Dendritic cell treated with granulocyte-macrophage colony-stimulating factor and Interleukin-4, amounts not matched to agents 40 ng/mL and 50 ng/mL, for 4 days (primary cell): ENCODE measurements at regions of chr16 and their contacts with region 1.

Region 1: GRCh38 chr16:20900299-20901067 is at the starts of genes DCUN1D3 and LYRM1:
- H3K4me3 Mint-ChIP-seq: peak within 1 kb of the TSS; percentile 95
- H3K27ac Mint-ChIP-seq: peak within 1 kb of the TSS; percentile 99
- H3K4me1 Mint-ChIP-seq: peaks cover 76% of the 10 kb centered on the region
- H3K27me3 Mint-ChIP-seq: no peaks in the 10 kb centered on the region

Region 2: GRCh38 chr16:20883558-20884556 is 16.6 kb before region 1 on chr16:
- intact Hi-C with region 1: no loop called
- H3K4me3 Mint-ChIP-seq: no peak overlapping the region
- H3K27ac Mint-ChIP-seq: no peak overlapping the region
- H3K4me1 Mint-ChIP-seq: peaks cover 54% of the 10 kb centered on the region
- H3K27me3 Mint-ChIP-seq: no peaks in the 10 kb centered on the region

Region 3: DNA sequence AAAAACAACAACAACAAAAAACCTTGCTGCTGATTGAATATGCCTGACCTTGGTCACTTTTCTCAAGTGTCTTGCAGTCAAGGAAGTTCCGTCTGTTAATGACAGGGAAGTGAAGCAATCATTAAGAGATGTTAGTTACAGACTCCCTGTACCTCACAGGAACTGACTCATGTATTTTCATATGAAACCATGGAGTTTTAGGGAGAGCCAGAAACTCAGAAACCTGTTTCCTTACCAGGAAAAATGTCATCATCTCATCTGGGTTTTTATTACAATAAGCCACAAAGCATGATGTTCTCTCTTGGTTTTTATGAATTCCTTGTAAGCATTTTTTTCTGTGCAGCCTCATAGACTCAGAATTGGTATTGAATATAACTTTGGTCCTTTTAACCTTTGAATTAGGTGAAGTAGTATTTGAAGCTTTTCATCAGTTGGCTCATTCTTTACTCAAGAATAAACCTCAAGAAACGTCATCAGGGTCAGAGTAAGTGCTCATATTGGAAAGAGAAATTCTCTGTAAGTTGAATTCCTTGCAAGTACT is 10.4 kb after region 1 on chr16:
- intact Hi-C with region 1: loop called (anchors 1 kb)
- H3K4me3 Mint-ChIP-seq: peak overlapping the region; percentile 56
- H3K27ac Mint-ChIP-seq: peak overlapping the region; percentile 96
- H3K4me1 Mint-ChIP-seq: peaks cover 69% of the 10 kb centered on the region
- H3K27me3 Mint-ChIP-seq: no peaks in the 10 kb centered on the region

Region 4: GRCh38 chr16:20918486-20919239 is 18.2 kb after region 1 on chr16:
- intact Hi-C with region 1: loop called (anchors 2 kb)
- H3K4me3 Mint-ChIP-seq: peak overlapping the region; percentile 20
- H3K27ac Mint-ChIP-seq: peak overlapping the region; percentile 79
- H3K4me1 Mint-ChIP-seq: peaks cover 70% of the 10 kb centered on the region
- H3K27me3 Mint-ChIP-seq: no peaks in the 10 kb centered on the region

Region 5: GRCh38 chr16:20944861-20945574 is 44.5 kb after region 1 on chr16:
- intact Hi-C with region 1: loop called (anchors 5 kb)
- H3K4me3 Mint-ChIP-seq: no peak overlapping the region
- H3K27ac Mint-ChIP-seq: peak overlapping the region; percentile 52
- H3K4me1 Mint-ChIP-seq: peaks cover 48% of the 10 kb centered on the region
- H3K27me3 Mint-ChIP-seq: peaks cover 2% of the 10 kb centered on the region